ENCODE measurements at regions of chr14 and their contacts with region 1.

Region 1: DNA sequence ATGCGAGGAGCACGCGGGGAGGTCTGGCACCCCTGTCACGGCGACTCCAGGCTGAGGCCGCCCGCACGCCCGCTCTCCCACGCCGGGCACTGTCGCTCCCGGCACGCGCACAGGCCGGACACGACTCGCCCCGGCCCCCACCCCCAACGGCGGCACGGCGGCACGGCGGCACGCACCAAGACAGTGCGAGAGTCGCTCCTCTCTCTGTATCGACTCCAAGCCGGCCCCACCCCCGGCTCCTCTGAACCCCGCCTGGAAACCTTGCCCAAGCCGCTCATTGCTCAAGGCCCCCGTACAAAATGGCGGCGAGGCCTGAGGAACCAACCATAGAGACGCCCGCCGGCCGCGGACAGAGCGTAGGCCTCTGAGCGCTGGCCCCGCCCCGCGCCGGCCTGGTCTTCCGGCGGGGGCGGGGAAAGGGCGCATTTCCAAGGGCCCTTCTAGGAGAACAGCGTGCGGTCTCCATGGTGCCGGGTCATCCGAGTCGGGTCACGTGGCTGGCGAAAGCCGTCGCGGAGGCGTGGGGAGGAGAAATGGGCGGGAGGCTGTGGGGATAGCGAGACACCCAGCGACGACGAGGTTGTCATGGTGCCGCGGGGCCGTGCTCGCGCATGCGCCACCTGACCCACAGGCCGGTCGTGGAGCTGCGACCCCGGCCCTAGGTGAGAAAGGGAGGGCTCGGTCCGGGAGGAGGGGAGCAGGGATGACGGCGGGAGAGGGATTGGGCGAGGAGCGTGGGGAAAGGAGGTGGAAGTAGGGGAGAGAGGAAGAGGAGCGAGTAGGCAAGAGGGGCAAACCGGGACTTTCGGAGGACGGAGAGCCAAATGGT is at the start of gene CIPC:
- DNase-seq: peak; percentile 100
- ATAC-seq: peak; percentile 87
- H3K4me3 ChIP-seq: peak within 1 kb of the TSS; percentile 88
- H3K27ac ChIP-seq: peak within 1 kb of the TSS; percentile 86
- H3K4me1 ChIP-seq: peaks cover 27% of the 10 kb centered on the region
- H3K27me3 ChIP-seq: no peaks in the 10 kb centered on the region
- CTCF ChIP-seq: no peak
- total RNA-seq, gene CIPC: 26.0 and 26.6 TPM in 2 replicates

Region 2: GRCh38 chr14:77033622-77034521 is 64.0 kb before region 1 on chr14:
- CTCF ChIA-PET with region 1: no interaction called
- POLR2A ChIA-PET with region 1: interaction called, 21 read pairs
- intact Hi-C with region 1: loop called (anchors 2 kb)
- DNase-seq: peak; percentile 99
- ATAC-seq: peak; percentile 43
- H3K4me3 ChIP-seq: peak overlapping the region; percentile 67
- H3K27ac ChIP-seq: peak overlapping the region; percentile 97
- H3K4me1 ChIP-seq: peaks cover 84% of the 10 kb centered on the region
- H3K27me3 ChIP-seq: no peaks in the 10 kb centered on the region
- CTCF ChIP-seq: no peak

Region 3: GRCh38 chr14:77123381-77124311 is 25.7 kb after region 1 on chr14:
- CTCF ChIA-PET with region 1: no interaction called
- POLR2A ChIA-PET with region 1: interaction called, 3 read pairs
- intact Hi-C with region 1: loop called (anchors 2 kb)
- DNase-seq: peak; percentile 96
- ATAC-seq: peak; percentile 91
- H3K4me3 ChIP-seq: no peak overlapping the region
- H3K27ac ChIP-seq: no peak overlapping the region
- H3K4me1 ChIP-seq: peaks cover 26% of the 10 kb centered on the region
- H3K27me3 ChIP-seq: no peaks in the 10 kb centered on the region
- CTCF ChIP-seq: no peak

Region 4: GRCh38 chr14:77320238-77320935 is 222.5 kb after region 1 on chr14 and contains the start of gene POMT2:
- CTCF ChIA-PET with region 1: no interaction called
- POLR2A ChIA-PET with region 1: no interaction called
- intact Hi-C with region 1: loop called (anchors 2 kb)
- DNase-seq: peak; percentile 98
- ATAC-seq: peak; percentile 66
- H3K4me3 ChIP-seq: peak within 1 kb of the TSS; percentile 86
- H3K27ac ChIP-seq: peak within 1 kb of the TSS; percentile 88
- H3K4me1 ChIP-seq: peaks cover 42% of the 10 kb centered on the region
- H3K27me3 ChIP-seq: no peaks in the 10 kb centered on the region
- CTCF ChIP-seq: peak; percentile 52; the same call in 1 of the 2 replicates
- total RNA-seq, gene POMT2: 57.6 and 67.6 TPM in 2 replicates